Ascending aorta (tissue), 2 donors: ENCODE measurements at regions of chr3 and their contacts with region 1.

Region 1: GRCh38 chr3:120417272-120417911 is 33.4 kb downstream of the FSTL1 start:
- DNase-seq: peak; percentile 84 to 97
- H3K4me3 ChIP-seq: peak overlapping the region; percentile 38 to 53
- H3K27ac ChIP-seq: peak overlapping the region; percentile 56 to 80
- H3K4me1 ChIP-seq: peaks cover 42 to 52% of the 10 kb centered on the region in 2 donors
- H3K27me3 ChIP-seq: no peaks in the 10 kb centered on the region
- CTCF ChIP-seq: peak; percentile 69 to 88 (median 78)

Region 2: GRCh38 chr3:119676771-119677640 is 740.4 kb before region 1 on chr3 and contains the start of gene COX17:
- intact Hi-C with region 1: loop called (anchors 10 kb)
- DNase-seq: peak; percentile 80 to 97
- H3K4me3 ChIP-seq: peak within 1 kb of the TSS; percentile 56 to 80
- H3K27ac ChIP-seq: peak within 1 kb of the TSS; percentile 93
- H3K4me1 ChIP-seq: peaks cover 3 to 18% of the 10 kb centered on the region in 2 donors
- H3K27me3 ChIP-seq: no peaks in the 10 kb centered on the region
- CTCF ChIP-seq: no peak
- total RNA-seq, gene COX17: 12.5 TPM

Region 3: DNA sequence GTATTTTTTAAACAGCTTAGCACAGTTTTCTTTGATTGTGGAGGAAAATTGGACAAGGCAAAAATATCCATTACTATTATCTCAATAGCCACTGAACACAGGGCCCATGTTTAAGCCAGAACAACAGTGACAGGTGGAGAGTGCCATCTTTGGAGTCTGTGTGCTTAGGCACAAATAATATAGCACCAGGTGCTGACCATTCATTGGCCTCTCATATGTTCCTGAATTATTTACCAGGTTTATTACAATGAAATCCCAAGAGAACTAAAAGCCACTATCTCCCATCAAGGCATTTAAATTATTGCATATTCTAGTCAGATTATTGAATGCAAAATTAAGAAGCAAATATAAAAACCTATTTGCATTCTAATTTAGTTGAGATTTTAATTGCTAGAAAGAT is 172.0 kb before region 1 on chr3:
- intact Hi-C with region 1: loop called (anchors 2 kb)
- DNase-seq: no peak
- H3K4me3 ChIP-seq: no peak overlapping the region
- H3K27ac ChIP-seq: no peak overlapping the region
- H3K4me1 ChIP-seq: no peaks in the 10 kb centered on the region
- H3K27me3 ChIP-seq: no peaks in the 10 kb centered on the region
- CTCF ChIP-seq: no peak

Region 4: GRCh38 chr3:120263792-120264191 is 153.6 kb before region 1 on chr3:
- intact Hi-C with region 1: no loop called
- DNase-seq: no peak
- H3K4me3 ChIP-seq: no peak overlapping the region
- H3K27ac ChIP-seq: no peak overlapping the region
- H3K4me1 ChIP-seq: no peaks in the 10 kb centered on the region
- H3K27me3 ChIP-seq: no peaks in the 10 kb centered on the region
- CTCF ChIP-seq: no peak

Region 5: DNA sequence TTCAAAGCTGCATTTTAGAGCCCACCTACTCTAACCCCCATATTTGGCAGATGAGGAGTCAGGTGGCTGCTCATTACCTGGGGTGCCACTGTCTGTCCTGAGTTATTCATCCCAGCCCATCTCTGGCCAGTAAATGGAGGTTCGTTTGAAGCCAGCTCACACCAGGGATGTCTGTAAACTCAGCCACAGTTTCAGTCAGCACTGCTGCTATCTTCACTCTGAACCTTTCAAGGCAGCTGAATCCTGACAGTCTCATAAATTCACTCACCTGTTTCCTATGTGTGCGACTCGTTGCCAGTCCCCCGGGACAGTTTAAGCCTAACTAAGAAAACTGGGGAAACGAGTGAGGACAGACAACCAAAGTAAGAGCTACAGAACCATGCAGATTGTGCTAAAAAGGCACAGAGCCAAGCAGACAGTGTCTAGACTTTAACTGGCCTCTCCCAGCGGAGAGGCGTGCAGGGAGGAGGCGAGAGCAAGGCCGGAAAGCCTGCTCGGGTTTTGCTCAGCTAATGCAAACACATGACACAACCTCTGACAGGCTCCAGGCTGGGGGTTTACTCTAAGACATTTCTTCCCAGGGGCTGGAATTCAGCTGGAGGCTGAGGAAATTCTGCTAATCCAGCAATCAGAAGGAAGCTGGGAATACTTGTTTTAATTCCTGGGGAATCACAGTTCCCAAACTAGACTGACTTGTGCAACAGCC is 21.4 kb after region 1 on chr3:
- intact Hi-C with region 1: loop called (anchors 2 kb)
- DNase-seq: peak in 1 of 2 donors; percentile 87
- H3K4me3 ChIP-seq: peak overlapping the region; percentile 11 to 23
- H3K27ac ChIP-seq: peak overlapping the region; percentile 80 to 88
- H3K4me1 ChIP-seq: peaks cover 33 to 86% of the 10 kb centered on the region in 2 donors
- H3K27me3 ChIP-seq: no peaks in the 10 kb centered on the region
- CTCF ChIP-seq: no peak

Region 6: DNA sequence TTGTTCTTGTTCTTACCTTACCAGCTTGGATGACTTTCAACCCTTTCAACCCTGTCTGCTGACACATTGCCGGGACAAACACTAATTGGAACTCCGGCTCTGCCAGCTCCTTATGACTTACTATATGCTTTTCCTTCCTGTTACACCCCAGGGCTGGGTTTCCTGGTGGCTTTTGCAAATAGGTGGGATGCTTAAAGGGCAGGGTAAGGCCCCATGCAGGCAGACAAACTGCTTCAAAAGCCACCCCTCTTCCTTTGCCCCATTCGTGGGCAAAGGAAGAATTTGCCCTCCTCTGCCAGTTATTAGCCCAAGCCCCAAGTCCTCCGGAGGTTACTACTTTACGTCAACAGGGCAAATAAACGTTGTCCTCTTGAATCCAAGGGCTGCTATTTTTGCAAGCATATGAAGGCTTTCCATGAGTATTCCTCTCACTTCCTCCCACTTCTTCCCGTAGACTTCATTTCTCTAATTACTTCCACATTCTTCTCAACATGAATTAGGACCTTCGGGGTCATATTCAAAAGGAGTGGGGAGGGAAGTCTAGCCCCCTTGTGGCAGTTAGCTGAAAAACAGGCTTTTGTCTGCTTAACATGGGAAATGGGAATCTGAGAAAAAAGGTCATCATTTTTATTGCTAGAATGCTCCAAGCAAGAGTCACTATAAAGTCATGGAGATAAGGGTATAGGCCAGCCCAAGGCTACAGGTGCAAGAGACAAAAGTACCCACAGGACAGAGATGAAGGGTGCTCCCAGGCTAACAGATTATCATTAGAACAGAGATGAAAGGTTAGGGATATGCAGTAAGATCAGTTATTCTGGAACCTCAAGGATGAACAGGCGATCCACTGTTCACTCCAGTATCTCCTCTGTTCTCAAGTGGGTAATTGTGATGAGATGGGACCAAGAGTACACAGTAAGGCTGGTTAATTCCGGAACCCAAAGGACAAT is 89.7 kb after region 1 on chr3:
- intact Hi-C with region 1: loop called (anchors 2 kb)
- DNase-seq: peak in 1 of 2 donors; percentile 75
- H3K4me3 ChIP-seq: no peak overlapping the region
- H3K27ac ChIP-seq: peak overlapping the region; percentile 25 to 39
- H3K4me1 ChIP-seq: peaks cover 5 to 14% of the 10 kb centered on the region in 2 donors
- H3K27me3 ChIP-seq: no peaks in the 10 kb centered on the region
- CTCF ChIP-seq: peak; percentile 44 to 66 (median 50)

Region 7: GRCh38 chr3:120742198-120742849 is 324.9 kb after region 1 on chr3 and contains the starts of genes GTF2E1 and RABL3:
- intact Hi-C with region 1: loop called (anchors 10 kb)
- DNase-seq: peak; percentile 96 to 99
- H3K4me3 ChIP-seq: peak within 1 kb of the TSS; percentile 87 to 97
- H3K27ac ChIP-seq: peak within 1 kb of the TSS; percentile 92 to 93
- H3K4me1 ChIP-seq: peaks cover 4 to 9% of the 10 kb centered on the region in 2 donors
- H3K27me3 ChIP-seq: no peaks in the 10 kb centered on the region
- CTCF ChIP-seq: no peak
- total RNA-seq, gene GTF2E1: 4.4 TPM
- total RNA-seq, gene RABL3: 3.0 TPM

Region 8: DNA sequence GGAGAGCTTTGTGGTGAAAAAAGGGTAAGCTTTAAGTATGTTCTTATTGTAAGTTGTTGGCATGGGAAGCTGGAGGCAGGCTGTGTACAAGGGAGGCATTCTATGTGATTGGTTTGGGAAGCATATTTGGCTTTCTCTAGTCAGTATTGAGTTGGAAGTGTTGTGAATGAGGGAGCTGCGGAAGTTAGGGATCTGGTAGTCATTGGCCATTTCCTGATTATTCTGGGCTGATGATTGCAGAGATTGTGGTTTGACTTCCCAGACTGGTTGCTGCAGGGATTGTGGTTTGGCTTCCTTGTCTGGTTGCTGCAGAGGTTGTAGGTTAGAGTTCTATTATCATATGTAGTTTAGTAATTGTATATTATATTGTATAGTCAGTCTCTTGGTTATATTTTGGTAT is 511.6 kb after region 1 on chr3:
- intact Hi-C with region 1: no loop called
- DNase-seq: no peak
- H3K4me3 ChIP-seq: no peak overlapping the region
- H3K27ac ChIP-seq: no peak overlapping the region
- H3K4me1 ChIP-seq: no peaks in the 10 kb centered on the region
- H3K27me3 ChIP-seq: no peaks in the 10 kb centered on the region
- CTCF ChIP-seq: no peak